Panc1 (cell line): ENCODE measurements at regions of chr7 and their contacts with region 1.

Region 1: GRCh38 chr7:23445326-23445725 is 25.0 kb downstream of the IGF2BP3 start:
- DNase-seq: no peak
- ATAC-seq: peak; percentile 56; the same call in 1 of the 2 replicates
- H3K4me3 ChIP-seq: no peak overlapping the region
- H3K27ac ChIP-seq: no peak overlapping the region
- H3K4me1 ChIP-seq: peaks cover 3% of the 10 kb centered on the region; the same call in 1 of the 2 replicates
- H3K27me3 ChIP-seq: no peaks in the 10 kb centered on the region
- CTCF ChIP-seq: no peak

Region 2: DNA sequence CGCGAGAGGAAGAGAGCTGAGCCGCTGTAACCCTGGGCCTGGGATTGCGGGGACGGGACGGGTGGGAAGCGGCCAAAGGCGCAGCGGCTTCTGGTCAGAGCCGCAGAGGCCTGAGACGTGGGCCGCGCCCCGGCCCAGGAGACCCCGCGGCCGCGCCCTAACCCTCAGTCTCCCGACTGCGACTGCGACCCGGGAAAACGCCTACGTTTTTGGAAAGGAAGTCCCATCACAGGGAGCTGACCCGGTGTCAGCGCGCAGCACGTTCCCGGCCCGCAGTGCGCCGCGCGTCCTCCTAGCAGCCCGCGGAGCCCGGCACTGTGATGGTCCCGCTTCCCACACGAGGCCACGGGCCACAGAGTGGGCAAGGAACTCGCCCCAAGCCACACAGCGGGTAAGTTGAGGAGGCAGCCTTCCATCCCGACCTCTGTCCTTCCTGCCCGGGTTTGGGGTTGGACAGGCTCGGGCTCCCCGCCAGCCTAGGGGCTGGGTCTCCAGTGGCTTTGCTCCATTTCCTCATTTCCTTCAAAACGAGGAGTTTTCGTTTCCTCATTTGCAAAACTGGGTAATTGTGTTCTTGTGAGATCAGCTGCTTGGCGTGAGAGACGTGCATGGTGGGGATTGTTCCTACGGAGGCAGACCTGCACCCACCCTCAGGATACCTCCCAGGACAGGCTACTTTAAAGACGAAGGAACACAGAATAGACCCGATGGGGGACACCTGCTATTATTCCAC is 197.6 kb before region 1 on chr7:
- CTCF ChIA-PET with region 1: no interaction called
- POLR2A ChIA-PET with region 1: interaction called, 19 read pairs
- in situ Hi-C with region 1: no loop called
- intact Hi-C with region 1: no loop called
- DNase-seq: no peak
- ATAC-seq: no peak
- H3K4me3 ChIP-seq: no peak overlapping the region
- H3K27ac ChIP-seq: no peak overlapping the region
- H3K4me1 ChIP-seq: peaks cover 5% of the 10 kb centered on the region; the same call in 1 of the 2 replicates
- H3K27me3 ChIP-seq: peaks cover 5% of the 10 kb centered on the region; the same call in 1 of the 2 replicates
- CTCF ChIP-seq: no peak

Region 3: DNA sequence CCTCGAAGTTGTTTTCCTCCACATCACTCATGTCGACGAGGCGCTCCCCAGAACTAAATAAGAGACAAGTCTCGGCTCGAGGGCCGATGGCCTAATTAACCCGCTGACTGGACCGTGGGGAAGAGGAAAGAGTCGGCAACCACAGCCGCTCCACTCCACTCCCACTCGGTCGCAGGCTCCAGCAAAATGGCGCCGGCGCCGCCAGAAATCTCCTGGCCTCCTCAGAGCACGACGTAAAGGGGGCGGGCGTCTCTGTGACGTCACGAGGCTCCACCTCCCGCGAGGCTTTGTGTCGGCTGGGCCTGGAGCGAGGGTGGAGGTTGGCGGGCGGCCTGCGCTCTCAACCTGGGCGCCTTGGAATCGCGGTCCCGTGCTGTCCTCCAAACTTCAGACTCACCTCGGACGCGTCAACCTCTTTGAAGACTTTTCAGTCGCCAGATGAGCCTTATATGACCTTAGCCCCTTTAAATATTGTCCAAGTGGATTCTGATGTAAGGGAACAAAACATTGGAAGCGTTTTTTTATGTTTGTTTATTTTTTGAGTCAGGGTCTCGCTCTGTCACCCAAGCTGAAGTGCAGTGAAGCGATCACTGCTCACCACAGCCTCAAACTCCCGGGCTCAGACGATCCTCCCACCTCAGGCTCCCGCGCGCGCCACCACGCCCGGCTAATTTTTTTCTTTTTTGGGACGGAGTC is 86.6 kb after region 1 on chr7 and contains the start of gene TRA2A:
- CTCF ChIA-PET with region 1: no interaction called
- POLR2A ChIA-PET with region 1: no interaction called
- in situ Hi-C with region 1: no loop called
- intact Hi-C with region 1: no loop called
- DNase-seq: peak; percentile 86
- ATAC-seq: peak; percentile 98
- H3K4me3 ChIP-seq: peak within 1 kb of the TSS; percentile 92 to 94
- H3K27ac ChIP-seq: peak within 1 kb of the TSS; percentile 97
- H3K4me1 ChIP-seq: peaks cover 34% of the 10 kb centered on the region
- H3K27me3 ChIP-seq: no peaks in the 10 kb centered on the region
- CTCF ChIP-seq: no peak
- total RNA-seq, gene TRA2A: 106 TPM